ENCODE measurements at regions of chr5 and their contacts with region 1.

Region 1: DNA sequence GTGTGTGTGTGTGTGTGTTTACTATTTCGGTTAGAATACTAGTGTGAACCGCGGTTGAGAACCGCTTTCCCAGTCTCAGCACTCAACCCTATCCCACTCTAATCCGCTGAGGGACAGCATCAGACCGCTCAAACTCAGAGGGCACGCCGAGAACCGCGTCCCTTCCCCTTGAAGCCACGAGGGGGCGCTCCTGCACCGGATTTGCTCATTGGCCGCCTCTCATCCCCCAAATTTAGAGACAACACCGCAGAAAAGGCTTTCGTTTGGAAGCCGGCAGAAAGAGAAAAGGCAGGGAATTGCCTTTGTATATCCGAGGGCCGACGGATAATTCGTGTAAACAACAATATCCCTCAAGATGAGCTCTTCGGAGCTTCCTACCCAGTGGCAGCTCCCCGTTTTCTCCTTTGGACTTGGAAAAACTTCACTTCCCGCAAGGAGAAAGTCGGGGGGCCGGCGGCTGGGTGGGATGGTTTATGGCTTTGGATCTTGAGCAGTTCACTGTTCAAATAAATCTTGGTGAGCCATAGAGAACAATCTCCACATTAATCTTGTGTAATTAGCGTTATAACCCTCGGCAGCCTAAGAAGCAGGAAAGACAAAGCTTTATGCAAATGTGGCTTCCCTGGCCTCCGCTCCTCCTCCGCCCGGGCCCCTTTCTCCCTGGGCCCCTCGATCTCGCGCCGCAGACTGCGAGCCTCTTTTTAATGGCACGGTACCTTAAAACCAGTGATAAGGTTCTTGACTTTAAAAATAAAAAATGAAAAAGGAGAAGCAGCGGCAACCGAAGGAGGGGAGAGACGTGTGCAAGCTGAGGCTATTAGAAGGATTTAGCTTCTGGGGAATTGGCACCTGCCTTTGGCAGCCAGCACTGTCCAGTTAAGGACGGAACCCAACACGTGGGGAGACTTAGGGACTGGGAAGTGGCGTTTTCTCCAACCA is 296.8 kb downstream of the PARP8 start:
- DNase-seq: peak; percentile 66 to 78
- H3K4me3 ChIP-seq: peak overlapping the region; percentile 16
- H3K4me3 Mint-ChIP-seq: peak overlapping the region; percentile 72
- H3K27ac Mint-ChIP-seq: no peak overlapping the region
- H3K4me1 ChIP-seq: no peaks in the 10 kb centered on the region
- H3K4me1 Mint-ChIP-seq: no peaks in the 10 kb centered on the region
- H3K27me3 ChIP-seq: no peaks in the 10 kb centered on the region
- H3K27me3 Mint-ChIP-seq: peaks cover 6% of the 10 kb centered on the region
- CTCF ChIP-seq: peak; percentile 95 to 98

Region 2: DNA sequence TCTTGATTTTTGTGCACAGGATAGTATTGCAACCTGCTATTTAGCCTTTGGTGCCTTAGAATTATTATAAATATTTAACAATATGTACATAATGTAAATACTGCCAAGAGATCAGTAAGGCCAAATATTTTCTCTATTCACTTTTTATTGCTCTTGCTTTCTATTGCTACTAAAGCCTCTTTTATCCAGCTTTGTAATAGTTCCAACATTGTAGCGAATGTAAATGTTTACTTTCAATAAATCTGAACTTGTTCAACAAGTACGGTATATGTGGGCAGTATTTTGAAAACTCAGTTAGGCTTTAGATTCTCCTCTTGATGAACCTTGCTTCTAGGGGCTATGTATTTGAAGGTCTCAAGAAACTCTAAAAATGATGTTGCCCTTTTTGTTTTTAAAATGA is 116.9 kb before region 1 on chr5:
- CTCF ChIA-PET with region 1: no interaction called
- POLR2A ChIA-PET with region 1: no interaction called
- intact Hi-C with region 1: no loop called
- DNase-seq: no peak
- H3K4me3 ChIP-seq: no peak overlapping the region
- H3K4me3 Mint-ChIP-seq: no peak overlapping the region
- H3K27ac Mint-ChIP-seq: no peak overlapping the region
- H3K4me1 ChIP-seq: no peaks in the 10 kb centered on the region; the same call in 1 of the 2 replicates
- H3K4me1 Mint-ChIP-seq: no peaks in the 10 kb centered on the region
- H3K27me3 ChIP-seq: no peaks in the 10 kb centered on the region
- H3K27me3 Mint-ChIP-seq: no peaks in the 10 kb centered on the region
- CTCF ChIP-seq: no peak

Region 3: GRCh38 chr5:50945139-50945538 is 18.1 kb before region 1 on chr5:
- CTCF ChIA-PET with region 1: no interaction called
- POLR2A ChIA-PET with region 1: no interaction called
- intact Hi-C with region 1: no loop called
- DNase-seq: no peak
- H3K4me3 ChIP-seq: no peak overlapping the region
- H3K4me3 Mint-ChIP-seq: no peak overlapping the region
- H3K27ac Mint-ChIP-seq: no peak overlapping the region
- H3K4me1 ChIP-seq: no peaks in the 10 kb centered on the region
- H3K4me1 Mint-ChIP-seq: no peaks in the 10 kb centered on the region
- H3K27me3 ChIP-seq: no peaks in the 10 kb centered on the region
- H3K27me3 Mint-ChIP-seq: no peaks in the 10 kb centered on the region
- CTCF ChIP-seq: no peak

Region 4: GRCh38 chr5:51347704-51348103 is 384.5 kb after region 1 on chr5:
- CTCF ChIA-PET with region 1: interaction called, 3 read pairs
- POLR2A ChIA-PET with region 1: no interaction called
- intact Hi-C with region 1: loop called (anchors 1 kb)
- DNase-seq: no peak
- H3K4me3 ChIP-seq: no peak overlapping the region
- H3K4me3 Mint-ChIP-seq: no peak overlapping the region
- H3K27ac Mint-ChIP-seq: no peak overlapping the region
- H3K4me1 ChIP-seq: no peaks in the 10 kb centered on the region
- H3K4me1 Mint-ChIP-seq: no peaks in the 10 kb centered on the region
- H3K27me3 ChIP-seq: no peaks in the 10 kb centered on the region
- H3K27me3 Mint-ChIP-seq: no peaks in the 10 kb centered on the region
- CTCF ChIP-seq: peak; percentile 16 to 27

Region 5: GRCh38 chr5:51684794-51685355 is 721.7 kb after region 1 on chr5:
- CTCF ChIA-PET with region 1: no interaction called
- POLR2A ChIA-PET with region 1: no interaction called
- intact Hi-C with region 1: loop called (anchors 10 kb)
- DNase-seq: no peak
- H3K4me3 ChIP-seq: no peak overlapping the region
- H3K4me3 Mint-ChIP-seq: no peak overlapping the region
- H3K27ac Mint-ChIP-seq: no peak overlapping the region
- H3K4me1 ChIP-seq: no peaks in the 10 kb centered on the region
- H3K4me1 Mint-ChIP-seq: no peaks in the 10 kb centered on the region
- H3K27me3 ChIP-seq: no peaks in the 10 kb centered on the region
- H3K27me3 Mint-ChIP-seq: no peaks in the 10 kb centered on the region
- CTCF ChIP-seq: no peak

Region 6: GRCh38 chr5:52007230-52007858 is 1044.1 kb after region 1 on chr5:
- CTCF ChIA-PET with region 1: interaction called, 6 read pairs
- POLR2A ChIA-PET with region 1: no interaction called
- intact Hi-C with region 1: loop called (anchors 1 kb)
- DNase-seq: peak; percentile 42 to 49
- H3K4me3 ChIP-seq: no peak overlapping the region
- H3K4me3 Mint-ChIP-seq: no peak overlapping the region
- H3K27ac Mint-ChIP-seq: no peak overlapping the region
- H3K4me1 ChIP-seq: no peaks in the 10 kb centered on the region
- H3K4me1 Mint-ChIP-seq: no peaks in the 10 kb centered on the region
- H3K27me3 ChIP-seq: no peaks in the 10 kb centered on the region
- H3K27me3 Mint-ChIP-seq: no peaks in the 10 kb centered on the region
- CTCF ChIP-seq: peak; percentile 67 to 81

Region 7: DNA sequence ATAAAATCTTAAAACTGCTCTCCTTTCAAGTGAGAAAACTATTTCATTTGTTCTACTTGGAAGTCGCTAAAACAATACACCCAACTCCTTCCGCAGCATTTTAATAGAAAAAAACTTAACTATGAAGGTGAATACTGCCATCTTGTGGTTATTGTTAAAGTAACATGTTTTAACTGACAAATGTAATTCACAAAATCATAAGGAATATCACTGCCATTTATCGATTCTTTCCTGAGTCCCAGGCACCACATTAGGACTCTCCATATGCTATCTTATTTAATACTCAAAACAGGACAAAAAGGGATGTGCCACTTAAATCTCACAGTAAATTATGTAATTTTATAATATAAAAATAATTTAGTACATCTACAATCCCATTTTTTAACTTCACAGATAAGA is 1694.0 kb after region 1 on chr5:
- CTCF ChIA-PET with region 1: no interaction called
- POLR2A ChIA-PET with region 1: no interaction called
- intact Hi-C with region 1: loop called (anchors 1 kb)
- DNase-seq: peak in 1 of 2 experiments; percentile 17
- H3K4me3 ChIP-seq: no peak overlapping the region
- H3K4me3 Mint-ChIP-seq: no peak overlapping the region
- H3K27ac Mint-ChIP-seq: no peak overlapping the region
- H3K4me1 ChIP-seq: no peaks in the 10 kb centered on the region
- H3K4me1 Mint-ChIP-seq: no peaks in the 10 kb centered on the region
- H3K27me3 ChIP-seq: no peaks in the 10 kb centered on the region
- H3K27me3 Mint-ChIP-seq: no peaks in the 10 kb centered on the region
- CTCF ChIP-seq: peak; percentile 23 to 47